ENCODE measurements at regions of chr3 and their contacts with region 1.

Region 1: GRCh38 chr3:196711838-196712513 is at the starts of genes CEP19 and PIGX:
- DNase-seq: peak; percentile 88 to 98
- ATAC-seq: peak; percentile 77 to 90 (median 85)
- H3K4me3 ChIP-seq: peak within 1 kb of the TSS; percentile 94
- H3K4me3 Mint-ChIP-seq: peak within 1 kb of the TSS; percentile 94
- H3K27ac ChIP-seq: peak within 1 kb of the TSS; percentile 99
- H3K27ac Mint-ChIP-seq: peak within 1 kb of the TSS; percentile 97 to 99
- H3K4me1 ChIP-seq: peaks cover 19% of the 10 kb centered on the region
- H3K4me1 Mint-ChIP-seq: peaks cover 13 to 19% of the 10 kb centered on the region in 2 donors
- H3K27me3 ChIP-seq: no peaks in the 10 kb centered on the region
- H3K27me3 Mint-ChIP-seq: no peaks in the 10 kb centered on the region
- CTCF ChIP-seq: no peak
- total RNA-seq, gene CEP19: 0.92 to 1.8 (median 1.1) TPM
- total RNA-seq, gene PIGX: 23.9 to 31.8 (median 24.2) TPM

Region 2: DNA sequence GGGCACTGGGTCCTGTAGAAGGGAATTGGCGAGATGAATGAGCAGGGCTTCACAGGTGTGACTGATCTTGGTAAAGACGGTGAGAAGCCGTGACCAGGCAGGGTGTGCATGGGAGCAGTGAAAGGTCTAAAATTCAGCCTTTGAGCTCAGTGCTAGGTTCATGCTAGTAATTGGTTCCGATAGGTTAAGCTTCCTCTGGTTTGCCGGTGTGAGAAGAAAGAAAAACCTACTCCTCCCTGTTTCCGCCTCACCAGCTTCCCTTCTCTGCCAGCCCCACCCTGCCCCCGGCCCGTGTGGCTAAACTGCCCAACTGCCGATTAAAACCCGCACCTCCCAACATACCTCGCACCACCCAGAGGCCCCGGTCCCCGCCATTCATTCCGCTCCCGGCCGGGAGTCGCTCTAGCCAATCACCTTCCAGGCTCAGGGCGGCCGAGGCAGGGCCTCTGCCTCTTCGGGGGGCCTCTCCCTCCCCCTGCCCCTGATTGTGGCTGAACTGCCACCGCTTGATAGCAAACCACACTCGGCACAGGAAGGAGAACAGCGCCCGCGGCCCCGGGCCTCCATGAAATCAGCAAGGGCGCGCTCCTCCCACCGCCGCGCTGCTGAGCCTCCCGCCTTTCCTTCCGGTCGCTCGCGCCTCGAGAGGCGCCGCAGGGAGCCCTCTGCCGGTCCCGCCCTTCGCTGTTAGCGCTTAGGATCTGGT is 79.8 kb before region 1 on chr3:
- intact Hi-C with region 1: loop called (anchors 5 kb)
- DNase-seq: peak; percentile 82 to 94
- ATAC-seq: peak; percentile 69 to 89 (median 85)
- H3K4me3 ChIP-seq: peak overlapping the region; percentile 51
- H3K4me3 Mint-ChIP-seq: peak overlapping the region; percentile 86
- H3K27ac ChIP-seq: peak overlapping the region; percentile 92
- H3K27ac Mint-ChIP-seq: peak overlapping the region; percentile 93 to 95
- H3K4me1 ChIP-seq: peaks cover 81% of the 10 kb centered on the region
- H3K4me1 Mint-ChIP-seq: peaks cover 75 to 76% of the 10 kb centered on the region in 2 donors
- H3K27me3 ChIP-seq: no peaks in the 10 kb centered on the region
- H3K27me3 Mint-ChIP-seq: no peaks in the 10 kb centered on the region
- CTCF ChIP-seq: no peak

Region 3: GRCh38 chr3:196650740-196651311 is 61.1 kb before region 1 on chr3:
- intact Hi-C with region 1: no loop called
- DNase-seq: no peak
- ATAC-seq: peak in 2 of 3 donors; percentile 20 to 64
- H3K4me3 ChIP-seq: no peak overlapping the region
- H3K4me3 Mint-ChIP-seq: peak overlapping the region; percentile 68
- H3K27ac ChIP-seq: no peak overlapping the region
- H3K27ac Mint-ChIP-seq: peak overlapping the region; percentile 27 to 72
- H3K4me1 ChIP-seq: peaks cover 68% of the 10 kb centered on the region
- H3K4me1 Mint-ChIP-seq: peaks cover 72 to 74% of the 10 kb centered on the region in 2 donors
- H3K27me3 ChIP-seq: no peaks in the 10 kb centered on the region
- H3K27me3 Mint-ChIP-seq: no peaks in the 10 kb centered on the region
- CTCF ChIP-seq: no peak

Region 4: DNA sequence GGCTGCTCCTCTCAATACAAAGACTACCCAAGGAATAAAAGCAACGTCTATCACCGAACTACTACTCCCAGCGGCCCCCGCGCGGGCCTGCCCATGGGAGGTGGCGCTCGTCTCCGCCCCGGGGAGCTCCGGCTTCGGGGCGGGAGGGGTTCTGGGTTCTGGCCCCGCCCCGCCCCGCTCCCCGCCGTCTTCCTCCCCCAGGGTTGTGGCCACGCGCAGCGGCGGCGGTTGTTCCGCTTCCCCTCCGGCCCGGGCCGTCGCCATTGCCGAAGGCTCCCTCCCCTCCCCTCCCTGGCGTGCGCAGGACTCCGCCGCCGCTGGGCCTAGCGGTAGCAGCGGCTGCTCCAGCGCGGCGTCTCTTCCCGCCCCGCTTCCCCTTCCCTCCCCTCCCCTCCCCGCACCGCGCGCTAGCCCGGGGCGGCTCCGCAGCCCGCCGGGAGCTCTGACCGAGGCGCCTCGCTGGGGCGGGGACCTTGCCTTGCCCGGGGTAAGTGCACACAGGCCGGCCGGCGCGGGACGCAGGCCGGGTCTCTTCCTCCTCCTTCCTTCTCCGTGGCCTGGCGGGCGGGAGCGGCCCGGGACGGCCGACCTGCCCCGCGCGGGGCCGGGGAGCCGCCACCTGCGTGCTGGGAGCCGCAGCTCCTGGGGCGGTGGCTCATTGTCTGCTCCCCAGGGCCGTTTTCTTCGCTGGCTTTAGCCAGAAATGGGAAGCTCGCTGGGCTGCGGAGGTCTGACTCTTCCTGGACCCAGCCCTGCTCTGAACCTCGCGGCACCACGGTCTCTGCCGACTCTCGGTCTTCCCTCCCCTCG is 27.9 kb after region 1 on chr3 and contains the start of gene PAK2:
- intact Hi-C with region 1: loop called (anchors 1 kb)
- DNase-seq: peak; percentile 77 to 93
- ATAC-seq: peak; percentile 88 to 97 (median 92)
- H3K4me3 ChIP-seq: peak within 1 kb of the TSS; percentile 81
- H3K4me3 Mint-ChIP-seq: peak within 1 kb of the TSS; percentile 98
- H3K27ac ChIP-seq: peak within 1 kb of the TSS; percentile 83
- H3K27ac Mint-ChIP-seq: peak within 1 kb of the TSS; percentile 92 to 93
- H3K4me1 ChIP-seq: peaks cover 13% of the 10 kb centered on the region
- H3K4me1 Mint-ChIP-seq: peaks cover 26 to 31% of the 10 kb centered on the region in 2 donors
- H3K27me3 ChIP-seq: no peaks in the 10 kb centered on the region
- H3K27me3 Mint-ChIP-seq: no peaks in the 10 kb centered on the region
- CTCF ChIP-seq: no peak
- total RNA-seq, gene PAK2: 64.5 to 68.6 (median 66.4) TPM

Measured in natural killer cell (primary cell).